ENCODE measurements at regions of chr19 and their contacts with region 1.

Region 1: GRCh38 chr19:10960314-10961072 is at the start of gene SMARCA4:
- DNase-seq: peak; percentile 99
- ATAC-seq: peak; percentile 76
- H3K4me3 Mint-ChIP-seq: peak within 1 kb of the TSS; percentile 89
- H3K27ac Mint-ChIP-seq: peak within 1 kb of the TSS; percentile 90
- H3K4me1 Mint-ChIP-seq: peaks cover 38% of the 10 kb centered on the region
- H3K27me3 Mint-ChIP-seq: no peaks in the 10 kb centered on the region
- total RNA-seq, gene SMARCA4: 102 to 116 TPM

Region 2: GRCh38 chr19:10194500-10195289 is 765.8 kb before region 1 on chr19 and contains the start of gene DNMT1:
- CTCF ChIA-PET with region 1: no interaction called
- POLR2A ChIA-PET with region 1: no interaction called
- intact Hi-C with region 1: loop called in 1 of 2 experiments (anchors 5 kb)
- DNase-seq: peak; percentile 99
- ATAC-seq: peak; percentile 94
- H3K4me3 Mint-ChIP-seq: peak within 1 kb of the TSS; percentile 89
- H3K27ac Mint-ChIP-seq: peak within 1 kb of the TSS; percentile 97
- H3K4me1 Mint-ChIP-seq: peaks cover 49% of the 10 kb centered on the region
- H3K27me3 Mint-ChIP-seq: no peaks in the 10 kb centered on the region
- total RNA-seq, gene DNMT1: 374 to 385 TPM

Region 3: GRCh38 chr19:10835754-10836477 is 124.6 kb before region 1 on chr19 and contains the start of gene TMED1:
- CTCF ChIA-PET with region 1: no interaction called
- POLR2A ChIA-PET with region 1: no interaction called
- intact Hi-C with region 1: loop called in 1 of 2 experiments (anchors 1 kb)
- DNase-seq: peak; percentile 99
- ATAC-seq: peak; percentile 93
- H3K4me3 Mint-ChIP-seq: peak within 1 kb of the TSS; percentile 94
- H3K27ac Mint-ChIP-seq: peak within 1 kb of the TSS; percentile 99
- H3K4me1 Mint-ChIP-seq: peaks cover 15% of the 10 kb centered on the region
- H3K27me3 Mint-ChIP-seq: no peaks in the 10 kb centered on the region
- total RNA-seq, gene TMED1: 8.7 to 15.3 TPM

Region 4: DNA sequence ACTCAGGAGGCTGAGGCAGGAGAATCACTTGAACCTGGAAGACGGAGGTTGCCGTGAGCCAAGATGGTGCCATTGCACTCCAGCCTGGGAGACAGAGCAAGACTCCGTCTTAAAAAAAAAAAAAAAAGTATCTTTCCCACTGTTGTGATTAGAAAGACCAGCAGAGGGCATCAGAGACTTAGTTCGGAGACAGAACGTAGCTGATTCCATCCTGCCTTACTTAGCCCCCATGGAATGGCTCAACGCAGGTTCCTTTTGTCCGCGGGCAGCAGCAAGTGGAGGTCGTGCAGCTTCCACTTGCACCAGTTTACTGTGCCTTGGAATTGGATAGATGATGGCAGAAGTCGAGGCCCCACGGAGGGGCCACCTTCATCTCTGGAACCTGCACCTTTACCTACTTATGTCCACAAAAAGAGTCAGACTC is 23.8 kb before region 1 on chr19:
- CTCF ChIA-PET with region 1: interaction called, 24 read pairs
- POLR2A ChIA-PET with region 1: interaction called, 6 read pairs
- intact Hi-C with region 1: no loop called
- DNase-seq: peak; percentile 49
- ATAC-seq: peak; percentile 90
- H3K4me3 Mint-ChIP-seq: no peak overlapping the region
- H3K27ac Mint-ChIP-seq: no peak overlapping the region
- H3K4me1 Mint-ChIP-seq: peaks cover 2% of the 10 kb centered on the region
- H3K27me3 Mint-ChIP-seq: no peaks in the 10 kb centered on the region

Region 5: GRCh38 chr19:11155373-11156120 is 195.1 kb after region 1 on chr19 and contains the start of gene SPC24:
- CTCF ChIA-PET with region 1: no interaction called
- POLR2A ChIA-PET with region 1: no interaction called
- intact Hi-C with region 1: loop called in 1 of 2 experiments (anchors 1 kb)
- DNase-seq: peak; percentile 97
- ATAC-seq: peak; percentile 99
- H3K4me3 Mint-ChIP-seq: peak within 1 kb of the TSS; percentile 79
- H3K27ac Mint-ChIP-seq: peak within 1 kb of the TSS; percentile 80
- H3K4me1 Mint-ChIP-seq: peaks cover 12% of the 10 kb centered on the region
- H3K27me3 Mint-ChIP-seq: no peaks in the 10 kb centered on the region
- total RNA-seq, gene SPC24: 59.6 to 72.2 TPM

Region 6: GRCh38 chr19:11505032-11505503 is 544.6 kb after region 1 on chr19:
- CTCF ChIA-PET with region 1: no interaction called
- POLR2A ChIA-PET with region 1: no interaction called
- intact Hi-C with region 1: loop called in 1 of 2 experiments (anchors 1 kb)
- DNase-seq: peak; percentile 98
- ATAC-seq: peak; percentile 95
- H3K4me3 Mint-ChIP-seq: peak overlapping the region; percentile 83
- H3K27ac Mint-ChIP-seq: peak overlapping the region; percentile 87
- H3K4me1 Mint-ChIP-seq: peaks cover 12% of the 10 kb centered on the region
- H3K27me3 Mint-ChIP-seq: no peaks in the 10 kb centered on the region

Measured in activated CD4-positive, alpha-beta T cell treated with anti-CD3 and anti-CD28 coated beads for 36 hours (primary cell).